Mammary epithelial cell (primary cell): ENCODE measurements at regions of chr3 and their contacts with region 1.

Region 1: DNA sequence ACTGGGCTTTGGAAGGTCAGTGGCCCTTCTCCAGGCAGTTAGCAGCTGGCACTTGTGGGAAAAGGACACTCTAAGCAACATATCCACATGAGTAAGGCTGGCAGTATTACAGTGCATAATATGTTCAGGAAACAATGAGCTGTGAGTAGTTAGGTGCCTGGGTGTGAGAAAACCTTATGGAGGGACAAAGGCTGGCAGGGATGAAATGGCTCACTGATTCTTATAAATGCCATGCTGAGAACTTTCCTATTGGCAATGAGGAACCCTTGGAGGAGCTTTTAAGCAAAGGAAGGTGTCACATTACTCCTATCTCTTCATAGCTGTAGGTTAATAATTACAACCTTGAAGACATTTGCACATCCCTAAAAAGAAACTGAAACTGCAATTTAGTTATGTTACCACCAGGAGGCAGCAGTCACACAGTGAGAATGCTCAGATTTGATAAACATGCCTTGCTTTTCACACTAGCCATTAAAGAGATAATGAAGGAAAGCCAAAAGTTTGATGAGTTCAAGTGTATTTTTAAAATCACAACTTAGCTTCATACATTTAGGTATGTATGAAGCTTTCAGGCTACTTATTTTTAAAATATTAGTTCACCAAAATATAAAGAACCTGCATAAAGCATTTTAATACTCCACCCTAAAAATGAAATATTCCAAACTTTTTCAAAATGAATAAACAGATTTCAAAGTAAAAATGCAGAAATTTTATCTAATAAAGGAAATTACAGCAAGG is 136.6 kb upstream of the SLC2A2 start:
- DNase-seq: no peak
- H3K4me3 ChIP-seq: no peak overlapping the region
- H3K27ac ChIP-seq: no peak overlapping the region
- H3K4me1 ChIP-seq: peaks cover 16% of the 10 kb centered on the region
- H3K27me3 ChIP-seq: no peaks in the 10 kb centered on the region
- CTCF ChIP-seq: peak; percentile 55 to 60

Region 2: DNA sequence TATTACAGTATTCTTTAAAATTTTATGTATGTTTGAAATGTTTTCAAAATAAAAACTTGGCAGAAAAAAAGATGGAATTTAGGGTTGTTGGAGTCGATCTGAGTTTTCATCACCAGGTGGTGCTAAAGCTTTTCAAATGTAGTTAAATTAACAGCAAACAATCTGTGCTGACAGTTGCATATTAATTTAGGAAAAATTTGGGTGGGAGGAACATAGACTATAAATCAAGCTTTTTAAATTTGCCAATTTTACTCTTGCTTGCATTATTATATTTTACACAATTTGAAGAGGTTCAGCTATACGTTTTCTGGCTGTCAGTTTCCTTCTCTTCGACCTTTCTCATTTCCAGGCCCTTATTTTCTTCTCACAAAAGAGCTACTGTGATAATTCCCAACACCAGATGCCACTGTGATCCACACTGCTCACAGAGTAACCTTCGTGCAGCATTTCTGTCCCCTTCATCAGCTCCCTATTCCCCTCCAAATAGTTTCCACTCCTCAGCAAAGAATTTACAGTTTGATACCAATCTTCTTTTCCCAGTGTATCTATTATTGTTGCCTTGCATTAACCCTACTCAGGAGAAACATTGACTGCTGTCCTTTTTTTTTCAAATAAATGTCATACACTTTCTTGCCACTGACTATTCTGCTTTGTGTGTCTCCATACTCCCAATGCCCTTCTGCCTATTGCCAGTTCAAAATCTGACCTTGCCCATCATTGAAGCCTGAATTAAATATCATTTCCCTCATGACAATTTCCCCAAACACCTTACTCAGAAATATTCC is 201.3 kb before region 1 on chr3:
- CTCF ChIA-PET with region 1: no interaction called
- dilution Hi-C with region 1: no loop called
- in situ Hi-C with region 1: loop called (anchors 10 kb)
- intact Hi-C with region 1: loop called (anchors 5 kb)
- DNase-seq: peak; percentile 12
- H3K4me3 ChIP-seq: no peak overlapping the region
- H3K27ac ChIP-seq: no peak overlapping the region
- H3K4me1 ChIP-seq: no peaks in the 10 kb centered on the region
- H3K27me3 ChIP-seq: no peaks in the 10 kb centered on the region
- CTCF ChIP-seq: peak; percentile 49 to 58

Region 3: DNA sequence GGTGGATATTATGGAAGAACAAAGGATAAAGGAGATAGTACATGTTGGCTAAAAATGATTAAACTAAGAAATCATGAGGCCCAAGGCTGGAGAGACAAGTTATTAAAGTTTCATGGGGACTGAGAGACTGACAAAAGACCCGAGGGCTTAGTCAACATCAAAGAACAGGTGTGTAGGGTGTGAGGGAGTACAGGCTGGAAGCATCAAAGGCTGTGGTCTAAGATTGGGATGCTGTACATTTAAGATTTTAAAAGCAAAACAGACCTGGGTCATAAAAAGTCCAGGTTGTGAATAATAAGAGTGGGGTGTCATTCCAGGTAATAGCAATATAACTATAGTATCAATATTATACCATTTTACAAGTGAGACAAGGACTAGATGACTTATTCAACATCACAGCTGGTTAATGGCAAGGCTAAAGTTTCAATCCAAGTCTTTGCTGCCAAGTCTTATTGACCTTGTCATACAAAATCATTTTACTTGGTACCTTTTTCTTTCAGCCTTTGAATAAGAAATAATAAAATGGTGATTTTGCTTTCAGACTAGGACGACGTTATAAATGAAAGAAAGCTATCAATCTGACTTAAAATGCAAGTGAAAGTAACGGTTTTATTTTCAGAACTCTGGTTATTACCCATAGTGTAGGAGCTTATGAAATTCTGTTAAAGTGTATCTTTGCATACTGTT is 85.4 kb after region 1 on chr3:
- CTCF ChIA-PET with region 1: no interaction called
- dilution Hi-C with region 1: no loop called
- in situ Hi-C with region 1: no loop called
- intact Hi-C with region 1: no loop called
- DNase-seq: no peak
- H3K4me3 ChIP-seq: no peak overlapping the region
- H3K27ac ChIP-seq: no peak overlapping the region
- H3K4me1 ChIP-seq: no peaks in the 10 kb centered on the region
- H3K27me3 ChIP-seq: no peaks in the 10 kb centered on the region
- CTCF ChIP-seq: no peak